Heart left ventricle (tissue), 16 donors: ENCODE measurements at regions of chr7 and their contacts with region 1.

Region 1: DNA sequence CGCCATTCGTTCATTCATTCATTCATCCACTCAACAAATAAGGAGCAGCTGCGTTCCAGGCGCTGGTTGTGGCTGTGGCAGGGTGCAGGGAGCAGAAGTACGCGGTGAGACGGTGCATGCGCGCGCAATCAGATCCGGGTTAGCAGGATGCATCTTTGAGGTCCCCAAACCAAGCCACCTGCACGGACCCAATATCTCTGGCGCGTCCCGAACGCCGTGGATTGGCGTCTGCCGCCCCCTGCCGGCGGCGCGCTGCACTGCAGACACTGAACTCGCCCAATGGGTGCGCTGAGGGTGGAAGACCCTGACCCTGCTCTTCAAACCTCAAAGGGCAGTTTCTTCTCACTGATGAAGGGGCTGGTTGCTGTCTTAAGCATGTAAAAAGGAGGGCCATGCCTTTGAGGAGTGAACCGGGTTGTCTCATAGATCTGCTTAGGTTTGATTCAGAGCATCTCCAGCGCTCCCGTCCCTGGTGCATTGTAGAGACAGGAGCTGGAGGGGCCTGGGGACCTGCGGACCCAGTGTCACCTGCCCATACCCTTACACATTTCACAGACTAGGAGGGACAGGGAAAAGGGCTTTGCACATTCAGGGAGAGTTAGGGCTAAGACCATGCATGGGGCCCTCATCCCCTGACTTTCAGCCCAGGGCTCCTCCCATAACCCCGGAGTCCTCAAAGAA is 102.5 kb downstream of the RAMP3 start:
- DNase-seq: peak; percentile 47 to 83 (median 60)
- ATAC-seq: peak; percentile 58 to 89 (median 81)
- H3K4me3 ChIP-seq: peak overlapping the region in 1 of 12 donors; percentile 14
- H3K27ac ChIP-seq: no peak overlapping the region
- H3K4me1 ChIP-seq: peaks cover 0 to 7% (median 0%) of the 10 kb centered on the region in 12 donors
- H3K27me3 ChIP-seq: peaks cover 0 to 16% (median 0%) of the 10 kb centered on the region in 9 donors
- CTCF ChIP-seq: peak; percentile 92 to 99 (median 98)
- POLR2A ChIP-seq: no peak

Region 2: DNA sequence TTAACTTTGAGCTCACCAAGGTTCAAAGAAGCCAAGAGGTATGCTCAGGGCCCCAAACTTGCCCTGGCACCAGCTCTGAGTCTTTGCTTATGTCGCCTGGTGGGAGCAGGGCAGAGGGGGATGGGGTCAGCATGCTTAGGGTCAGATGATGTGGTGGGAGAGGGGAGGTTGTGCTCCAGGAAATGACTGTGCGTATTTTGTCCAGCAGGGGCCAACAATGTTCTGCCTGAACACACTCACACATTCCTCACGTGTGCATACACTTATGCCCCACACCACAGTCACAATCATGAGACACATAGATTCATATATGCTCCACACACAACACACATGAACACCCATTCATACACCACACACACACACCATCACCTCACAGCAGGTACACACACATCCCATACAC is 106.9 kb before region 1 on chr7:
- intact Hi-C with region 1: loop called (anchors 1 to 2 kb)
- DNase-seq: peak in 1 of 5 donors; percentile 4
- ATAC-seq: no peak
- H3K4me3 ChIP-seq: no peak overlapping the region
- H3K27ac ChIP-seq: no peak overlapping the region
- H3K4me1 ChIP-seq: peaks cover 0 to 10% (median 4%) of the 10 kb centered on the region in 12 donors
- H3K27me3 ChIP-seq: peaks cover 0 to 13% (median 8%) of the 10 kb centered on the region in 9 donors
- CTCF ChIP-seq: no peak
- POLR2A ChIP-seq: no peak

Region 3: GRCh38 chr7:45217358-45217757 is 42.7 kb before region 1 on chr7:
- intact Hi-C with region 1: no loop called
- DNase-seq: no peak
- ATAC-seq: peak in 2 of 4 donors; percentile 18 to 38
- H3K4me3 ChIP-seq: no peak overlapping the region
- H3K27ac ChIP-seq: no peak overlapping the region
- H3K4me1 ChIP-seq: peaks cover 0 to 3% (median 0%) of the 10 kb centered on the region in 12 donors
- H3K27me3 ChIP-seq: peaks cover 0 to 27% (median 0%) of the 10 kb centered on the region in 9 donors
- CTCF ChIP-seq: peak in 9 of 12 donors; percentile 13 to 56 (median 30)
- POLR2A ChIP-seq: no peak

Region 4: DNA sequence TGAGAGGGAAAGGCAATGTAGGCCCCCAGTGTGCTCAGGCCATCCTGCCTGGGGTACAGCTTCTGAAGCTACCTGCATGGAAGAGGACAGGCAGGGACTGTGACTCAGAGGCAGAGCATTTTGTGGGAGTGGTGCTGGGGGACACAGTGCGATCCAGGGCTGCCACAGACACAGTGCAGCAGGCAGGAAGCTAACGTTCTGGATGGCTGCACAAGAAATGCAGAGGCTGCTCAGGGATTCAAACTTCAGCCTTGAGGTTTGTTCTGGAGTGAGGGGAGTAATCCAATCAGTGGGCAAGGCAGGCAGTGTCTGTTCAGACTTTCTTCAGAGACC is 1309.0 kb after region 1 on chr7:
- intact Hi-C with region 1: no loop called
- DNase-seq: no peak
- ATAC-seq: peak in 1 of 4 donors; percentile 54
- H3K4me3 ChIP-seq: no peak overlapping the region
- H3K27ac ChIP-seq: no peak overlapping the region
- H3K4me1 ChIP-seq: peaks cover 0 to 10% (median 0%) of the 10 kb centered on the region in 12 donors
- H3K27me3 ChIP-seq: no peaks in the 10 kb centered on the region
- CTCF ChIP-seq: no peak
- POLR2A ChIP-seq: no peak